Activated CD4-positive, alpha-beta T cell treated with anti-CD3 and anti-CD28 coated beads, Interleukin-2, amount 10 ng/mL, durations not matched to agents 24 days and 14 days (primary cell): ENCODE measurements at regions of chr12 and their contacts with region 1.

Region 1: GRCh38 chr12:122951979-122952892 is 14.0 kb downstream of the ABCB9 start:
- DNase-seq: peak; percentile 92
- H3K4me3 Mint-ChIP-seq: no peak overlapping the region
- H3K27ac Mint-ChIP-seq: no peak overlapping the region
- H3K4me1 Mint-ChIP-seq: peaks cover 6% of the 10 kb centered on the region
- H3K27me3 Mint-ChIP-seq: no peaks in the 10 kb centered on the region

Region 2: DNA sequence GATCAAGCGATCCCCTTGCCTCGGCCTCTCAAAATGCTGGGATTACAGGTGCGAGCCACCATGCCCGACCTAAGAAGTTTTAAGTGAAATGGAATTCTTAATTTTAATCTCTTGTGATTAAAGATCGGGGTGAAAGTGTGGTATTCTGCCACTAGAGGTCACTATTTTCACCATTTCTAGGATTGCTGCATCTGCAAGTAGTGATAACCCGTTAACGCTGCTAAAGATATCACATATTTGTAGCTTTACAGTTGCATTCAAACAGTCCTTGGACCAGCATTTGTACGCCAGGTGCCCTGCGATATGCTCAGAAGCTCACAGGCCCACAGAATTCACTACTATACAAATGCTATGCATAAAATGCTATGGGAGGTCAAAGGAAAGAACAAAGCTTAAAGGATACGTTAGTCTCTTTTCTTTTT is 158.5 kb before region 1 on chr12:
- intact Hi-C with region 1: loop called (anchors 1 kb)
- DNase-seq: peak; percentile 72
- H3K4me3 Mint-ChIP-seq: no peak overlapping the region
- H3K27ac Mint-ChIP-seq: no peak overlapping the region
- H3K4me1 Mint-ChIP-seq: no peaks in the 10 kb centered on the region
- H3K27me3 Mint-ChIP-seq: no peaks in the 10 kb centered on the region

Region 3: GRCh38 chr12:122860346-122861090 is 91.7 kb before region 1 on chr12:
- intact Hi-C with region 1: loop called (anchors 1 kb)
- DNase-seq: peak; percentile 94
- H3K4me3 Mint-ChIP-seq: no peak overlapping the region
- H3K27ac Mint-ChIP-seq: no peak overlapping the region
- H3K4me1 Mint-ChIP-seq: peaks cover 2% of the 10 kb centered on the region
- H3K27me3 Mint-ChIP-seq: no peaks in the 10 kb centered on the region